ENCODE measurements at regions of chr3 and their contacts with region 1.

Region 1: DNA sequence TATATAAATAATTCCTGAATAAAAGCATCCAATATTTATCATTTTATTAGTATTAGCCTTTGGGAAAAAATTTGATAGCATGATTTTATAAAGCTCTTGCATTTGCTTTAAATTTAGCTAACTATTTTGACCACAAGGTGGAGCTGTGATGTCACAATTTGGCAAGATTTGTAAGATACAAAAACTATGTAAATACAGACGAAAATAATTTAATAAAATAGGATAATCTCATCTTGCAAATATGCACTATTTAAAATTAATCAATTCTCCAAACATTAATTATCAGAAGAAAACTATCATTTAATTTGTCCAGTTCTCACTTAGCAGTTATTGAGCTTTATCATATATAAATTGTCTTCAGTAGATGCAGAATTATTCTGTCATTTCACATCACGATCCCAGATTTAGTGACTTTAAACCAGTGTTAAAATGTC is 95.4 kb downstream of the PLOD2 start:
- DNase-seq: peak; percentile 80
- H3K4me3 ChIP-seq: no peak overlapping the region
- H3K27ac ChIP-seq: no peak overlapping the region
- H3K4me1 ChIP-seq: peaks cover 4% of the 10 kb centered on the region
- H3K27me3 ChIP-seq: no peaks in the 10 kb centered on the region
- CTCF ChIP-seq: peak; percentile 27 to 30
- POLR2A ChIP-seq: no peak

Region 2: DNA sequence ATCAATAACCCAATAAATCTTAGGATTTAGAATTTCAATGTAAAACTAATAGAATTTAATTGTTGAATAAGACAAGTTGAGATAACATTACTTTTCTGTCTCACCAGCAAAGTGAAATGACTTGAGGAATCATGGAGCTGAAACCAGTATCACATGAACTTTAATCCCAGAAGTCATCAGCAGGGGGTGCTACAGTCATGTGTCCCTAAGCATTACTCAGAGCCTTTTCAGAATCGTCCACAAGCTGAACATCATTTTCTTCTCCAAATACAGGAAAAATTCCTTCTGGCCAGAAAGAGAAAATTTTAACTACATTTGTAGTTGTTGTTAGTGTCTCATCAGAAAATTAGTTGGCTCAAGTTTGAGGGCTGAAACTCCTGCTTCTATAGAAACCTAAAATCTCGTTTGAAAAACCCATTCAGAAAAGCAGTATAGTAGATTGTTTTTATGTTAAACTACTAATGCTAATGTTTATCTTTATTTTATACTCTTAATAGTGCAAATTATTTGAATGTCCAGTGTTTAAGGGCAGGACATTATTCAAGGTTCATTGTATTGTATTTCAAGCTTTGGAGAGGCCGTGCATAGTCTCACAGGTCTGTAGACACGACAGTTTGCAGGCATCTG is 288.7 kb before region 1 on chr3:
- CTCF ChIA-PET with region 1: interaction called, 25 read pairs
- POLR2A ChIA-PET with region 1: no interaction called
- dilution Hi-C with region 1: no loop called
- intact Hi-C with region 1: loop called (anchors 2 kb)
- DNase-seq: peak; percentile 80
- H3K4me3 ChIP-seq: no peak overlapping the region
- H3K27ac ChIP-seq: no peak overlapping the region
- H3K4me1 ChIP-seq: no peaks in the 10 kb centered on the region
- H3K27me3 ChIP-seq: peaks cover 0 to 3% of the 10 kb centered on the region in 2 experiments
- CTCF ChIP-seq: peak; percentile 53 to 62
- POLR2A ChIP-seq: no peak

Region 3: GRCh38 chr3:146148468-146148931 is 82.9 kb after region 1 on chr3:
- CTCF ChIA-PET with region 1: interaction called, 27 read pairs
- POLR2A ChIA-PET with region 1: no interaction called
- dilution Hi-C with region 1: no loop called
- intact Hi-C with region 1: no loop called
- DNase-seq: peak; percentile 48
- H3K4me3 ChIP-seq: no peak overlapping the region
- H3K27ac ChIP-seq: no peak overlapping the region
- H3K4me1 ChIP-seq: peaks cover 30% of the 10 kb centered on the region
- H3K27me3 ChIP-seq: no peaks in the 10 kb centered on the region
- CTCF ChIP-seq: peak in 1 of 2 donors; percentile 24
- POLR2A ChIP-seq: no peak

Region 4: DNA sequence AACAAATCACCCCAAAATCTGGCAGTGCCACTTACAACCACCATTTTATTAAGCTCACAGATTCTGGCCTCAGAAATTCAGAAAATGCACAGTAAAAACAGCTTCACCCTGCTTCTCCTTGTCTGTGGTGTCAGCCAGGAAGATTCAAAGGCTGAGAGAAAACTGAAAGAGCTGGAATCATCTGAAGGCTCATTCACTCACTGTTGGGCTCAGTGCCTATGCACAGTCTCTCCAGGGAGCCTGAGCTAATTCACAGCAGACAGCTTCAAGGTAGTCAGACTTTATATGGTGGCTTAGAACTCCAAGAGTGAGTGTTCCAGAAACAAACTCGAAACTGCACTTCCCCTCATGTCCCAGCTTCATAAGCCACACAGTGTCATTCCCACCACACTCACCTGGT is 111.9 kb after region 1 on chr3:
- CTCF ChIA-PET with region 1: interaction called, 12 read pairs
- POLR2A ChIA-PET with region 1: no interaction called
- dilution Hi-C with region 1: no loop called
- intact Hi-C with region 1: no loop called
- DNase-seq: no peak
- H3K4me3 ChIP-seq: peak overlapping the region in 1 of 3 experiments; percentile 26
- H3K27ac ChIP-seq: peak overlapping the region; percentile 99
- H3K4me1 ChIP-seq: peaks cover 37% of the 10 kb centered on the region
- H3K27me3 ChIP-seq: no peaks in the 10 kb centered on the region
- CTCF ChIP-seq: no peak
- POLR2A ChIP-seq: no peak

Region 5: GRCh38 chr3:146195605-146196004 is 130.0 kb after region 1 on chr3:
- CTCF ChIA-PET with region 1: interaction called, 170 read pairs
- POLR2A ChIA-PET with region 1: no interaction called
- dilution Hi-C with region 1: no loop called
- intact Hi-C with region 1: no loop called
- DNase-seq: no peak
- H3K4me3 ChIP-seq: no peak overlapping the region
- H3K27ac ChIP-seq: peak overlapping the region; percentile 81
- H3K4me1 ChIP-seq: peaks cover 45% of the 10 kb centered on the region
- H3K27me3 ChIP-seq: no peaks in the 10 kb centered on the region
- CTCF ChIP-seq: no peak
- POLR2A ChIP-seq: no peak

Region 6: GRCh38 chr3:146589899-146590508 is 524.4 kb after region 1 on chr3:
- CTCF ChIA-PET with region 1: interaction called, 3 read pairs
- POLR2A ChIA-PET with region 1: no interaction called
- dilution Hi-C with region 1: no loop called
- intact Hi-C with region 1: loop called (anchors 5 kb)
- DNase-seq: peak; percentile 67
- H3K4me3 ChIP-seq: no peak overlapping the region
- H3K27ac ChIP-seq: no peak overlapping the region
- H3K4me1 ChIP-seq: no peaks in the 10 kb centered on the region
- H3K27me3 ChIP-seq: no peaks in the 10 kb centered on the region
- CTCF ChIP-seq: peak; percentile 23 to 26
- POLR2A ChIP-seq: no peak

Measured in endothelial cell of umbilical vein (primary cell).